Ascending aorta (tissue), 2 donors: ENCODE measurements at regions of chr1 and their contacts with region 1.

Region 1: GRCh38 chr1:6245086-6245868 is 1.3 kb downstream of the HES3 start:
- DNase-seq: peak in 1 of 2 donors; percentile 83
- H3K4me3 ChIP-seq: no peak overlapping the region
- H3K27ac ChIP-seq: no peak overlapping the region
- H3K4me1 ChIP-seq: peaks cover 2 to 12% of the 10 kb centered on the region in 2 donors
- H3K27me3 ChIP-seq: peaks cover 49% of the 10 kb centered on the region
- CTCF ChIP-seq: peak; percentile 84 to 91 (median 88)

Region 2: DNA sequence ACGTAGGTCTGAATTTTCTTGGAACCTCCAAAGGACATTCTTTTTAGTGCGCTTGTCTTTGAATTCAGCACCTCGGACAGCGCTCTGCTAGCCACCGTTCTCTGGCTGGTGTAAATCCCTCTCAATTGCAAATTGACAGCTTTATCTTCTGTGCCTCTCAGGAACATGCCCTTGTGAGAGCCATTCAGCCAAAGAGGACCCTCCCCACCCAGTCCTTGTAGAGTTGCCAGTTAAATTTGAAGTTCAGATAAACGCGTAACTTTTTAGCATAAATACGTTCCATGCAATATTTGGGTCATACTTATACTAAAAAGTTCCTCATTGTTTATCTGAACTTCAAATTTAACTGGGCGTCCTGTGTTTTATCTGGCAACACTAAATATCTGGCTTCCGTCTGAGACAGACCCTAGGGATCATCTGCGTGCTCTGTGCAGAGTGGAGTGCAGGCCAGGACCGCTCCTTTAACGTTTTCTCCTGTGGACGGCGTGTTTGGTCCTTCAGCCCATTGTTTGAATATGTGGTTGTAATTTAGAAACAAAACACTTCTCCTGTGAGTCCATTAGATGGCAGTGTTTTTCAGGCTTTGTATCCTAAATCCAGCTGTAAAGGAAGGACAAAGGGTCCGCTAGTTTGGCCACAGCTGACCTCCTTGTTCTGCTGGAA is 192.6 kb before region 1 on chr1:
- intact Hi-C with region 1: loop called (anchors 5 kb)
- DNase-seq: no peak
- H3K4me3 ChIP-seq: no peak overlapping the region
- H3K27ac ChIP-seq: no peak overlapping the region
- H3K4me1 ChIP-seq: no peaks in the 10 kb centered on the region
- H3K27me3 ChIP-seq: no peaks in the 10 kb centered on the region
- CTCF ChIP-seq: peak in 1 of 3 experiments; percentile 42

Region 3: GRCh38 chr1:6343506-6344405 is 98.5 kb after region 1 on chr1:
- intact Hi-C with region 1: loop called (anchors 1 kb)
- DNase-seq: peak in 1 of 2 donors; percentile 74
- H3K4me3 ChIP-seq: no peak overlapping the region
- H3K27ac ChIP-seq: no peak overlapping the region
- H3K4me1 ChIP-seq: no peaks in the 10 kb centered on the region
- H3K27me3 ChIP-seq: no peaks in the 10 kb centered on the region
- CTCF ChIP-seq: peak; percentile 43 to 74 (median 73)

Region 4: GRCh38 chr1:6359216-6360116 is 114.2 kb after region 1 on chr1:
- intact Hi-C with region 1: loop called (anchors 5 kb)
- DNase-seq: peak; percentile 46 to 79
- H3K4me3 ChIP-seq: peak overlapping the region in 1 of 2 donors; percentile 28
- H3K27ac ChIP-seq: peak overlapping the region; percentile 81 to 83
- H3K4me1 ChIP-seq: peaks cover 14 to 23% of the 10 kb centered on the region in 2 donors
- H3K27me3 ChIP-seq: no peaks in the 10 kb centered on the region
- CTCF ChIP-seq: no peak

Region 5: DNA sequence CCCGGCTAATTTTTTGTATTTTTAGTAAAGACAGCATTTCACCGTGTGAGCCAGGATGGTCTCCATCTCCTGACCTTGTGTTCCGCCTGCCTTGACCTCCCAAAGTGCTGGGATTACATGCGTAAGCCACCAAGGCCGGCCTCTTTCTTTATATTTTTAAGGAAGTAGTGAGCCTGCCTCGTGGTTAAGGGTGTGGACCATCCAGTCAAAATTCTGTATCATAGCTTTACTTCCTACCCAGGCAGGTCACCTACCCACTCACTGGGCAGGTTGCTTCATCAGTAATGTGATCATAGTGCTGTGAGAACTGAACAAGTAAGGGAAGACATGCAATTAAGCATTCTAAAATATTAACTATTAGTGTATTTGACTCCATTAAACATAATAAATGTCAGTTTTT is 156.4 kb after region 1 on chr1:
- intact Hi-C with region 1: loop called (anchors 1 kb)
- DNase-seq: no peak
- H3K4me3 ChIP-seq: no peak overlapping the region
- H3K27ac ChIP-seq: no peak overlapping the region
- H3K4me1 ChIP-seq: no peaks in the 10 kb centered on the region
- H3K27me3 ChIP-seq: no peaks in the 10 kb centered on the region
- CTCF ChIP-seq: no peak

Region 6: DNA sequence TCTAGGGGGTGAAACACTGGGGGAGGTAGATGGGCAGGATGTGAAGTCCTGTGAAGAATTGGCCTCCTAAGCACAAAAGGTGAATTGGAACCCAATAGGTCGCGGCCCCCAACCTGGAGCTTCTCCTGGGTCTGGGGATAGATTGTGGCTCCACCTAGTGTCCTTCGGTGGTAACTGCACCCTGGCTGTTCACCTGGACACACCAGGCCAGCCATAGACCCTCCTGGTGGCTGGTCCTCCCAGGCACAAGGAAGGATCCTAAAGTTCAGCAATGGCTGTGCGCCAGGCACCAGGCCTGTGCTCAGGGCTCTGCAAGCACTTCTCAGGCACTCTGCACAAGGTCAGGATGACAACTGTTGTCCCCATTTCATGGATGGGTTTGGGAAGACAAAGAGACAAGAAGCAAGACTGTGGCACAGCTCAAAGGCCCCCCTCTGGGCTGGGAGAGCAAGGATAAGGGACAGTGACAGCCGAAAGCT is 192.8 kb after region 1 on chr1:
- intact Hi-C with region 1: loop called (anchors 1 kb)
- DNase-seq: peak in 1 of 2 donors; percentile 73
- H3K4me3 ChIP-seq: no peak overlapping the region
- H3K27ac ChIP-seq: no peak overlapping the region
- H3K4me1 ChIP-seq: no peaks in the 10 kb centered on the region
- H3K27me3 ChIP-seq: peaks cover 9% of the 10 kb centered on the region
- CTCF ChIP-seq: peak; percentile 83 to 98 (median 95)